ENCODE measurements at regions of chr11 and their contacts with region 1.

Region 1: DNA sequence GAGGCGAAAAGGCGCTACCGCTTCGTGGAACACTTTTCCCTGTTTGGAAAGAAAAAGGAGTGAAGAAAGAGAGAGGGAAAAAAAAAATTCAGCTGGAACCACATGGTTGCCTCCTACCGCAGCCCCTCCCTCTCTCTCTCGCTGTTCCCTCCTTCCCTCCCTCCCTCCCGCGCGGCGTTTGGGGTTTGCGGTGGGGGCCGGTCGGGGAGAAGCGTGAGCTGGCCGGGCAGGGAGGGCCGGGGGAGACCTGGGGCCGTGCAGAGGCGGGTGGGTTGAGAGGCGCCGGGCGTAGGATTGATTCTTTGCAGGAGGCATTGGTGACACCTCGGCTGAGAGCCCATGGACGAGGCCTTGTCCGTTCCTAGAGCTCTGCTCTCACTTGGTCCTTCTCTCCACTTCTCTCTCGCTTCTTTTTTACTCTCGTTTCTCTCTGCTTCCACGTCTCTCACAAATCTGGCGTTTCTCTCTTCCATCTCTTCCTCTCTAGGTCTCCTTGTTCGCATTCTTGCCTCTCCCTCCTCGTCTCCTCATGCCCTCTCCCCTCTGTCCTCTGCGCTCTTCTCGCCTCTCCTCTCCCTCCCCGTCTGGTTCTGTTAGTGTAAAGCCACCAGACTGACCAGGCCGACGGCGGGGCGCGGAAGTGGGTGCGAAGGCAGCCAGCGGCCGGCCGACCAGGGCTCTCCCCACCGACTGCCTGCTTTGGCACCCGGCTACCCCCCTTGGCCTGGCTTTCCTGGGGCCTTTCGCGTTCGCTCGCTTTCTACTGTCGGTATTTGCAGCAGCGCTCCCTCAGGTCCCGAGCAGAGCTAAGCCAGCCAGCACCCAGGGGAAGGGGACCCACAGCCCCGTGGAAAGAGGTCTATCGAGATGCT is at the start of gene CLMP:
- DNase-seq: peak in 1 of 2 donors; percentile 25
- ATAC-seq: peak; percentile 61 to 70
- H3K4me3 ChIP-seq: peak within 1 kb of the TSS; percentile 41 to 46 (median 44)
- H3K27ac ChIP-seq: peak within 1 kb of the TSS; percentile 37 to 61 (median 48)
- H3K4me1 ChIP-seq: peaks cover 0 to 9% of the 10 kb centered on the region in 2 donors
- H3K27me3 ChIP-seq: peaks cover 41 to 58% (median 49%) of the 10 kb centered on the region in 3 donors
- CTCF ChIP-seq: no peak
- POLR2A ChIP-seq: no peak
- total RNA-seq, gene CLMP: 2.3 to 12.5 (median 4.4) TPM

Region 2: DNA sequence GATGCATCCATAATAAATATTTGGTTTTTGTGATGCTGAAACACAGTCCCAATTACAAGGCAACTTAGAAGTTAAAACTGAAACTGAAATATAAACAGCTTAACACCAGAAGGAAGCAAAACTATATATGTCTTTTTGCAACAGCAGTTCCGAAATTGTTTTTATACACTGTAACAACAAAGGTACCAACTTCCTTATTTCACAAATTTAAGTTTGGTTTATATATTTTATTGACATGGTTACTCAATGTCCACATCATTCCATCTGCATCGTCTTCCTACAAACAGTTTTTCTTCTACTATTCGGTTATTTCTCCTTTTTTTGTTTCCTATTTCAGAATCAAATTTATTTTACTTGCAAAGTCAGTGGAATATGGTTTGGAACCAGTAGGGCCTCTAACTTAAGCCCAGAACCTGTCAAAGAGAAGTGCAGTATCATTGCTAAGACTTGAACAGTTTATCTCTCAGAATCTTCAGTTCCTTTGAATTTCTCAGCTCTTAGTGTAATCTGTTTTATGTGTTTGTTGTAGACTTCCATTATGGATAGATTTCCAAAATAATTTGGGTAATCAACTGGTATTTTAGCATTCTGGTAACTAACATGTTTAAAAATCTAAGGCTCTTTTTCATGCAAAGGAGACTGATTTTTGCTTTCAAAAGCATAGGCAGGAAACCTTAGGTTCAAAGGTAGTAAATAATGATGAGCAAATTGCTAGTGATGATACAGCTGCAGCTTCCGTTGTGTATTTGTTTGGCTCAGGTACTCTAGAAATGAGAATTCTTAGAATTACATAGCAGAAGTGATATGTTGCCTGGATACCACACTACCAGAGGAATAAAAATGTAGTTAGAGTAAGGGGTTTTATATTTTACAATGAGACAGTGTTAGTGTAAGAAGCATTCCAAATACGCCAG is 125.3 kb before region 1 on chr11:
- in situ Hi-C with region 1: no loop called
- intact Hi-C with region 1: no loop called
- DNase-seq: no peak
- ATAC-seq: no peak
- H3K4me3 ChIP-seq: peak overlapping the region in 1 of 4 donors; percentile 23
- H3K27ac ChIP-seq: peak overlapping the region in 3 of 4 donors; percentile 1 to 19 (median 14)
- H3K4me1 ChIP-seq: peaks cover 29 to 38% of the 10 kb centered on the region in 2 donors
- H3K27me3 ChIP-seq: no peaks in the 10 kb centered on the region
- CTCF ChIP-seq: no peak
- POLR2A ChIP-seq: no peak

Region 3: DNA sequence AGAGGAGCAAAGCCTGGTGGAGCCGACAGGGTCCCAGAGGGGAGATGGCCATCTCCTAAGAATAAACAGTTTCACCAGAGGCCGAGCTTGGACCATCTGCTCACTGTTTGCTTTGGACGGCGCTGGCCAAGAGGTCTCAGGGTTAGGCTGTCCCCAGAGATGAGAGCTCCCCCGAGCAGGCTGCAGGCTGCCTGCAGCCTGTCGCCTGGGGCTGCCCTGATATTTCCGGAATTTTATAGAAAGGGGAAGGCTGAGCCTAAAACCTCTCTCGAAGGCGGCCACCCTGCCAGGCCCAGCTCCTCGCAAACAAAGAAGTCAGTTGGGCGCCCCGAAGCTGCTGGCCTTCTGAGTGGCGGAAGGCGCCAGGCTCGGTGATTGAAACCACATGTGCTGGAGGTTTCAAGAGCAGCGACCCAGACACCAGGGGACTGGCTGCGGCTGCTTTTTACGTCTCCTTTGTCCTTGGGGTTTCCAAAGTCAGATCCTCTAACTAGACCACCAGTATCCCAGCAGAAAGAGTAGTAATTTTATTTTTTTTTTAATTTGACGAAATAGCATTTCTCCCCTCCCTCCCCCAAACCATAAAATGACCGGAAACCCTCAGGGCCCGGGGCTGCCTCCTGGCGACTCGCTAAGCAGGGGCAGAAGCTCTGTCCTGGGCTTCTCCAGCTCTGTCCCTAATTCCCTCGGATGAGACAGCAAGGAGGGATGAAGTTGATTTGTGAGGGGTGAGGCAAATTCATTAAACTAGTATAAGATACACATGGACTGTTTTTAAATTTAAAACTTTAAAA is 57.8 kb before region 1 on chr11:
- in situ Hi-C with region 1: no loop called
- intact Hi-C with region 1: loop called (anchors 10 kb)
- DNase-seq: peak; percentile 38 to 65
- ATAC-seq: peak; percentile 60 to 62
- H3K4me3 ChIP-seq: peak overlapping the region in 3 of 4 donors; percentile 13 to 24 (median 22)
- H3K27ac ChIP-seq: peak overlapping the region; percentile 18 to 67 (median 44)
- H3K4me1 ChIP-seq: peaks cover 0 to 3% of the 10 kb centered on the region in 2 donors
- H3K27me3 ChIP-seq: peaks cover 0 to 13% (median 0%) of the 10 kb centered on the region in 3 donors
- CTCF ChIP-seq: no peak
- POLR2A ChIP-seq: no peak

Region 4: GRCh38 chr11:123956752-123957151 is 761.3 kb after region 1 on chr11:
- in situ Hi-C with region 1: no loop called
- intact Hi-C with region 1: no loop called
- DNase-seq: no peak
- ATAC-seq: no peak
- H3K4me3 ChIP-seq: no peak overlapping the region
- H3K27ac ChIP-seq: no peak overlapping the region
- H3K4me1 ChIP-seq: no peaks in the 10 kb centered on the region
- H3K27me3 ChIP-seq: no peaks in the 10 kb centered on the region
- CTCF ChIP-seq: no peak
- POLR2A ChIP-seq: no peak